ENCODE measurements at regions of chr12 and their contacts with region 1.

Region 1: DNA sequence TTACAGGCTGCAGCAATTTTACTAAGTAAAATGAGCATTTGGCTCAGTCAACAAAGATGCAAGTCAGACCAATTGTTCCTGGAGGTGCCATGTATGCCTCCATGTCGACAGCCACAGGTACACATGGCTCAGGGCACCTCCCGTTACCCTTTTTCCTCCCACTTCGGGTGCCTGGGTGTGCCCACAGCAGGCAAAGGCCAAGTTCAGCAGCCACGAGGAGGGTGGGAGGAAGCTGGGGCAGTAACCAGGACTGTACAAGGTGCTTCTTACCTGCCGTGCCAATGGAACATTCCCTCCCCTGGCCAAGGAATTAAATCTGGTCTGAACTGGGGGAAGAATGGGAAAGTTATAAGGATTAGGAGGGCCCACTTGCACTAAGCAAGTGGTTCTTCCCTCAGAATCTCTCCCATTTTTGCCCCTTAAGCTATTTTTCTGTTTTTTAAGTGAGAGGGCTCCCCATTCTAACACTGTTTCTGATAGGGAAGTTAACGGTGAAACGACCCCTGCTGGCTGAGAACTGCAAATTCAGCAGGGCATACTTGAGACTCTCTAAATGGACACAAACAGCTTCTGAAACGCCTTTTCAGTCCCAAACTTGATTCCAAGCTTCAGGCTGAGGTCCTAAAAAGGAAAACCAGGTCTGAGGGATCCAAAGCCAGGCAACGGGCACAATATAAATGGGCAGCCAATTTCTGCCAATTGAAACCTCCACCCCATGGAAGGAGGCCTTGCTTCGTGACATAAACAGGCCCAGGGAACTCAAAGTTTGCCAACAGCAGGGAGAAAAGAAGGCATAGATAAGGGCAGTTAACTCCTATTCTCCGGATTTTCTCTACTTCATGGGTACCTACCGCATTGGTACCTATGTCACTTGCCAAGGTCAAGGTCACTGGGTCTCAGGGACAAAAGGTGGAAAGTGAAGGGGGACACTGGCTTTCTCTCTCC is 24.8 kb downstream of the CLECL1 start:
- H3K4me3 Mint-ChIP-seq: no peak overlapping the region
- H3K27ac Mint-ChIP-seq: peak overlapping the region; percentile 54
- H3K4me1 Mint-ChIP-seq: peaks cover 38% of the 10 kb centered on the region
- H3K27me3 Mint-ChIP-seq: no peaks in the 10 kb centered on the region

Region 2: GRCh38 chr12:9331218-9331626 is 376.9 kb before region 1 on chr12:
- intact Hi-C with region 1: loop called (anchors 10 kb)
- H3K4me3 Mint-ChIP-seq: no peak overlapping the region
- H3K27ac Mint-ChIP-seq: no peak overlapping the region
- H3K4me1 Mint-ChIP-seq: peaks cover 28% of the 10 kb centered on the region
- H3K27me3 Mint-ChIP-seq: peaks cover 1% of the 10 kb centered on the region

Region 3: DNA sequence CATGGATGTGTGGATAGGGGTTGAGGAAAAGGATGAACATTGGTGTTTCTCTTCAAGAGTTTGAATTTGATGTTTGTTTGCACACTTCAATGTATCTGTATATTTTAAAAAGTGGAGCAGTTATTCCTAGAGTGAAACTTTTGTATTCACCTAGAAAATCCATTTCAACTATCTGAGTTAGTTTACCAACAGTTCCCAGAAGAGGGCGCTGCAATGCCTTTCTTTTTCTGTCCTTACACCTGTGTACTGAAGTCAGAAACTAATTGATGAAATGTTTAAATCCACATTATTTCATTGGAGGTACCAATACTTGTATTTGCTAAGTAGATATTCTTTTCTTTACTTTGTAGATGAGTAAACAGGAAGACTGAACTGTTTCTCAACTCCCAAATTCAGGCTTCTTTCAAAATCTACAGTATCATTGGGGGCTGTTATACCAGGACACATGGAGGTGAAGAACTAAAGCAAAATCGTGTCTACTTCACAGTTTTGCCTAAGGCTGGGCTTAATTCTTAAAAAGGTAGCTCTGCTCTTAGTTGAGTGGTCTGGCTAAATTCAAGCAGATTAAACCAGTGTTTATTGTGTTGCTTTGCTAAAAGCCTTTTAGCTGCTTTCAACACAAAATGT is 73.8 kb before region 1 on chr12:
- intact Hi-C with region 1: loop called (anchors 1 kb)
- H3K4me3 Mint-ChIP-seq: no peak overlapping the region
- H3K27ac Mint-ChIP-seq: no peak overlapping the region
- H3K4me1 Mint-ChIP-seq: peaks cover 33% of the 10 kb centered on the region
- H3K27me3 Mint-ChIP-seq: no peaks in the 10 kb centered on the region

Measured in dendritic cell treated with granulocyte-macrophage colony-stimulating factor and Interleukin-4, amounts not matched to agents 40 ng/mL and 50 ng/mL, for 4 days (primary cell).